ENCODE measurements at regions of chr3 and their contacts with region 1.

Region 1: DNA sequence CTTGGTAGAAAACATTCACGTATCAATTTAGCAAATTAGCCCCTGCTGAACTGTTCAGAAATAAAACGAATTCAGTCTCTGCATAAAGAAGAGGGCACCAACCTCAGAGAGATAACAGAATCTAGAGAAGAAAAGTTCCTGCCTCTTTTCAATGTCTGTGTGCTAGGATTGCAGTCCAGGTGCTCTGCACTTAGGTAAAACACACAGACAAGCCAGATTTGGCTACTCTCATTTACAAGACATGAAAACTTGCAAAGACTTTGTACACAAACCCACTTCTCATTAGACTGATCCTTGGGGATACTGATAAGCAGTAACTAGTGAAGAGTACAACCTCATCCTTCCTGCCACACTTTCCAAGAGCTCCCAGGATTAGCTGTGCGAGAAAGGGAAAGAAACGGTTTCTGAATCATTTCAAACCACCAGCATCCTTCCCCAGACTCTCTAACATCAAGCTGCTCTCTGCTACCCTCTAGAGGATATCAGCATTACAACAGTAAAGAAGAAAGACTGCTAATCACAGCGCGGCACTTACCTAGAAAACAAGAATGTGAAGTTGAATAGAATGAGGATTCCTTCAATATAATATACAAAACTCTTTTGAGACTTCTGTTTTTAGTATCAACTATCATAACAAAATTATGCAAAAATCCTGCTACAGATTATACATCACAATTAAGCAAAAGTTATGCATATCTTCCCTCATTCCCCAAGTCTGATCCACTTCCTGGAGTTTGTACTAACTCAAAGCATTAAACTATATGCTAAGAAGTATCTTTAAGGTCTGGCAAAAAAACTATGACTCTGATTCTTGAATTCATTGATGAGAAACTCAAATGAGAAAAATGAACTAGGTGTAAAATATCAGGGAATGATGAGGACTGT is 306.4 kb downstream of the MAGI1 start:
- DNase-seq: no peak
- H3K4me3 ChIP-seq: no peak overlapping the region
- H3K27ac ChIP-seq: no peak overlapping the region
- H3K4me1 ChIP-seq: no peaks in the 10 kb centered on the region
- H3K27me3 ChIP-seq: no peaks in the 10 kb centered on the region
- CTCF ChIP-seq: peak; percentile 38 to 65 (median 55)
- POLR2A ChIP-seq: no peak

Region 2: GRCh38 chr3:64903006-64903405 is 829.3 kb before region 1 on chr3:
- intact Hi-C with region 1: loop called (anchors 5 kb)
- DNase-seq: no peak
- H3K4me3 ChIP-seq: no peak overlapping the region
- H3K27ac ChIP-seq: no peak overlapping the region
- H3K4me1 ChIP-seq: no peaks in the 10 kb centered on the region
- H3K27me3 ChIP-seq: no peaks in the 10 kb centered on the region
- CTCF ChIP-seq: no peak
- POLR2A ChIP-seq: no peak

Region 3: GRCh38 chr3:65751123-65751700 is 18.9 kb after region 1 on chr3:
- intact Hi-C with region 1: no loop called
- DNase-seq: no peak
- H3K4me3 ChIP-seq: no peak overlapping the region
- H3K27ac ChIP-seq: no peak overlapping the region
- H3K4me1 ChIP-seq: no peaks in the 10 kb centered on the region
- H3K27me3 ChIP-seq: no peaks in the 10 kb centered on the region
- CTCF ChIP-seq: peak in 1 of 3 donors; percentile 58
- POLR2A ChIP-seq: no peak

Region 4: DNA sequence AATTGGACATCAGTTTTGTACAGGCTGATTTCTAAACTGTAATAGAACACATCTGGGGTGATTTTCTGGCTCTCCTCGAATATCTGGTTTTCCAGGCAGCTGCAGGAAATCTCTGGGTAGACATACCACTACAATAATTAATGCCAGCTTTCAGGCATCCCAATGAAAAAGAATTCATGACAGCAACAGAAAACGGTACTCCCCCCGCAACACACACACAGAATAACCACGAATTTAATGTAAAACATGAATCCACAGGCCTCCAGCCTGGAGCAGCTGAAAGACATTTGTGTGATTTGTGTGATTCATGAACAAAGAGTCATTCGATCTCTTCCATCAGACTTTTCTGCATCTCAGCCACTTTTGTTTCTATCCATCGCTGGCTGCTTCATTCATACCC is 44.2 kb after region 1 on chr3:
- intact Hi-C with region 1: no loop called
- DNase-seq: no peak
- H3K4me3 ChIP-seq: no peak overlapping the region
- H3K27ac ChIP-seq: no peak overlapping the region
- H3K4me1 ChIP-seq: no peaks in the 10 kb centered on the region
- H3K27me3 ChIP-seq: no peaks in the 10 kb centered on the region
- CTCF ChIP-seq: no peak
- POLR2A ChIP-seq: no peak

Region 5: DNA sequence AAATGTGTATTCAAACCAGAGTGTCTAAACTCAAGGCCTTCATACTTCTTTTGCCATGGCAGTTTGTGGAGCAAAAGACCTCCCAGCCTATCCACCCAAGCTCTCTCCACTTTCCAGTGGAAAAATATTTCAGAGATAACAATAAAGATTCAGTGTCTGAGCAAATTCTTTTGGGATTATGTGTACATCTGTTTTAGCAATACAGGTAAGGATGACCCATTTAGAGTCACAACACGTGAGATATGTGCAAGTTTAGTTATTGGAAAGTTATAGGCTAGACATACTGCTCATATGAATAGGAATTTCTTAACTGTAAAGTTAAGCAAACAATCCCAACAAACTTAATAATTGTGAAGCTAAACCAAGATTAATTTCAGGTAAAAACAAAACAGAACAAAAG is 943.1 kb after region 1 on chr3:
- intact Hi-C with region 1: no loop called
- DNase-seq: no peak
- H3K4me3 ChIP-seq: no peak overlapping the region
- H3K27ac ChIP-seq: no peak overlapping the region
- H3K4me1 ChIP-seq: no peaks in the 10 kb centered on the region
- H3K27me3 ChIP-seq: no peaks in the 10 kb centered on the region
- CTCF ChIP-seq: no peak
- POLR2A ChIP-seq: no peak